Activated naive CD4-positive, alpha-beta T cell treated with anti-CD3 and anti-CD28 coated beads for 36 hours (primary cell): ENCODE measurements at regions of chr20 and their contacts with region 1.

Region 1: DNA sequence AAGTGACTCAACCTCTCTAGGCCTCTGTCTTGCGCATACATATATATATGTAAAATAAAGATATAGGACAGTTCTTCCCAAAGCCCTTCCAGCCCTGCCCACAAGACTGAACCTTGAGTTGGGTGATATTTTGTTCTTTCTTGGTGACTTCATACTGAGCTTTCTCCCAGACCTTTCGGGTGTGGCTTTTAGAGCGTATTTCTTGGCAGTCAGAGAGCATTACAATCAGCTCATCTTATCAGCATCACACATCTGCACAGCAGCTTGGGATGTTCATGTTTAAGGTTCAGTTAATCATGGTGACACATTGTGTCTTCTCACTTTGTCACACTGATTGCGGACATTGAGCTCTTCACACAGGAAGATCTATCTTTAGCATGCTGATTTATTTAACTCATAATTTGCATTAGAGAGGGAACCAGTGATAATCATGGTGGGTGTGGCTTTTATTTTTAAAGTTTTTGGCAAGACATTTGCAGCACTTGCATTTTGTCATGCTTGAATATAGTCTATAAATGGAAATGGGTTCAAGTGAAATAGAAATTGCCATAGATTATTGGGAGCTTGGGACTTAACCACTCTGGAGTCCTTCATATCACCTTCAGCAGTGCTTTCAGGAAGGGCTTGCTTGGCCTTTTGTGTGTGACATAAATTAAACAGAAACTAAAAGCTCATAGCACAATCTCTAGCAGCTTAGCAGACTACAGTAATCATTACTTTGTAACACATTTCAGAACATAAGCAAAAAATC is 8.3 kb downstream of the KIF3B start:
- DNase-seq: peak; percentile 78
- H3K4me3 Mint-ChIP-seq: peak overlapping the region; percentile 60
- H3K27ac Mint-ChIP-seq: peak overlapping the region; percentile 92
- H3K4me1 Mint-ChIP-seq: peaks cover 88% of the 10 kb centered on the region
- H3K27me3 Mint-ChIP-seq: no peaks in the 10 kb centered on the region

Region 2: DNA sequence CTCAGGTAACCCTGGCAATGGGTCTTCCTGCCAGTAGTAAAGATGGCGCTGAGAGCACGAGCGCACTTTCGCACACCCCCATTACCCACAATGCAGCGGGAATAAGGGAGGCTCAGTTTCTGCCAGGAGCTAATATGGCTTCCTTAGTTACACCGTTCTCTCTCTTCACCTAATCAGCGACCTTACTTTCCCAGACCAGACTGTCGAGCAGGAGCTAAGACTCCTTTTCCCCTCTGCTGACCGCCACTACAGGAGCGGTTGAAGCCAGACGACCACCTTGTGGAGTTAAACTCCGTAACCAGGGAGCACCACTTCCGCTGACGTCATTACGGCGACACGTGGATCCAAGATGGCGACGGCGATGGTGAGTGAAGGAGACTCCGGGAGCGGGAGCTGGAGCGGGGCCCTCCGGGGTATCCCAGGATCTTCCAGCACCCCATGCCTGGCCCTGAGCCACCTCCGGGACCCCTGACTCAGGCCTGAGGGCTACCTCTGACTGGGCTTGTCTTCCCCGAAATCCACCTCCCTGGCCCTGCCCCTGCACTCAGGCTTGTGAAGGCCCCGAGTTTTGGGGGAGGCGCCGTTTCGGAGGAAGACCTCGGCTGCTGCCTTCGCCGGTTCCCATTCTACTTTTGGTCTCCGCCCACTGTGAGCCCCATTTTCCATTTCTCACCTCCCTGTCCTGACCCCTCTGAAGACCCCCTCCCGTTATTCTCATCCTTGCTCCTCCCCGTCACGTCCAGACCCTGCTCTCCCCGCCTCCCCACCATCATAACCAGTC is 176.2 kb before region 1 on chr20 and contains the start of gene TM9SF4:
- CTCF ChIA-PET with region 1: no interaction called
- intact Hi-C with region 1: loop called (anchors 2 kb)
- DNase-seq: peak; percentile 94
- H3K4me3 Mint-ChIP-seq: peak within 1 kb of the TSS; percentile 91
- H3K27ac Mint-ChIP-seq: peak within 1 kb of the TSS; percentile 100
- H3K4me1 Mint-ChIP-seq: peaks cover 36% of the 10 kb centered on the region
- H3K27me3 Mint-ChIP-seq: no peaks in the 10 kb centered on the region
- total RNA-seq, gene TM9SF4: 37.9 to 39.1 TPM

Region 3: GRCh38 chr20:32231847-32232246 is 53.9 kb before region 1 on chr20:
- CTCF ChIA-PET with region 1: interaction called, 9 read pairs
- intact Hi-C with region 1: loop called (anchors 1 kb)
- DNase-seq: peak; percentile 75
- H3K4me3 Mint-ChIP-seq: peak overlapping the region; percentile 47
- H3K27ac Mint-ChIP-seq: peak overlapping the region; percentile 99
- H3K4me1 Mint-ChIP-seq: peaks cover 39% of the 10 kb centered on the region
- H3K27me3 Mint-ChIP-seq: no peaks in the 10 kb centered on the region

Region 4: GRCh38 chr20:32336918-32337347 is 51.1 kb after region 1 on chr20:
- CTCF ChIA-PET with region 1: interaction called, 4 read pairs
- intact Hi-C with region 1: loop called (anchors 1 kb)
- DNase-seq: no peak
- H3K4me3 Mint-ChIP-seq: no peak overlapping the region
- H3K27ac Mint-ChIP-seq: no peak overlapping the region
- H3K4me1 Mint-ChIP-seq: peaks cover 29% of the 10 kb centered on the region
- H3K27me3 Mint-ChIP-seq: no peaks in the 10 kb centered on the region

Region 5: GRCh38 chr20:32497589-32498224 is 211.9 kb after region 1 on chr20:
- CTCF ChIA-PET with region 1: no interaction called
- intact Hi-C with region 1: loop called (anchors 5 kb)
- DNase-seq: no peak
- H3K4me3 Mint-ChIP-seq: no peak overlapping the region
- H3K27ac Mint-ChIP-seq: no peak overlapping the region
- H3K4me1 Mint-ChIP-seq: peaks cover 32% of the 10 kb centered on the region
- H3K27me3 Mint-ChIP-seq: no peaks in the 10 kb centered on the region